Right ventricle myocardium inferior (tissue), 1 donor: ENCODE measurements at regions of chr1 and their contacts with region 1.

Region 1: GRCh38 chr1:9441451-9442133 is 97.7 kb upstream of the SLC25A33 start:
- DNase-seq: peak; percentile 76
- ATAC-seq: peak; percentile 37

Region 2: DNA sequence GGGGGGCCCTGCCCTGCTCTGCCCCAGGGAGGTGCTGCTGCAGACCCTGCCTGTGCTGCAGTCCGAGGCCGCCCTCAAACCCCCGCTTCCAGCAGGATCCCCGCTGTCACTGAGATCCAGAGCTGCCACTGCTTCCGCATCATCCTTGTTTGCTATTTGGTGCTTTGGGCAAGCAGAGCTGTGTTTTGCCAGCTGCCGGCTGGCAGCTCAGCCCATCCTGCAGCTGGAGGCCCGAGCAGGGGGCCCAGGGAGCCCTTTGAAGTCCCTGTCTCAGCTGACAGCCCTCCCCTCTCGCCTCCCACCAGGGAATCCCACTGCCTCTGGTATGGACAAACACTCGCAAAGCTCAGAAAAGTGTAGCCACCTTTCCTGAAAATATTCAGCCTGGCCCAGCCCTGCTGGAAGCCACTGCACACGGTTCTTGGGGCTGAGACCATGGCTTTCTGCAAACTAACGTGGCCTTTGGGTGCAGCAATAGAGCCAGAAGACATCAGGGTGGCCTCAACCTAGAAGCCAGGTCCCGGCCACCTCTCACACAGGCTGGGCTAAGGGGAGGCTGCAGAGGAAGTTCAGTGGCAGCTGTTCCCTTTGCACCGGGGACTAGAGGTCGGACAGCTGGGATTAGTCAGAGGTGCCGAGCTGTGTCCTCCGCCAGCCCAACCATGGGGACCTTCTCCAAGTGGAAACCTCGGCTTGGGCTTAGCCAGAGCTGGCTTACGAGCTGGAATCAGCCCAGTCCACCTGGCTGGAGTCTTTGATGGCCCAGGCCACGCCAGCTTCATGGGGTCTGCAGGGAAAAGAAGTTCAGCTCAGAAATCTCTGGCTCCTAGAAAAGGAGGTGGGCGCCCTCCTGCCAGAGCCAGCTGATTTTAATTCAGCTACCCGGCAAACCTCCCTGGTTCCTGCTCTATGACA is 41.8 kb before region 1 on chr1:
- intact Hi-C with region 1: loop called (anchors 5 kb)
- DNase-seq: no peak
- ATAC-seq: peak; percentile 63

Region 3: GRCh38 chr1:9413148-9413876 is 28.3 kb before region 1 on chr1:
- intact Hi-C with region 1: loop called (anchors 2 kb)
- DNase-seq: no peak
- ATAC-seq: peak; percentile 83